Activated CD4-positive, alpha-beta T cell treated with anti-CD3 and anti-CD28 coated beads for 36 hours (primary cell): ENCODE measurements at regions of chr13 and their contacts with region 1.

Region 1: GRCh38 chr13:32195713-32196112 is 119.5 kb downstream of the ZAR1L start:
- DNase-seq: no peak
- ATAC-seq: no peak
- H3K4me3 Mint-ChIP-seq: no peak overlapping the region
- H3K27ac Mint-ChIP-seq: no peak overlapping the region
- H3K4me1 Mint-ChIP-seq: no peaks in the 10 kb centered on the region
- H3K27me3 Mint-ChIP-seq: no peaks in the 10 kb centered on the region

Region 2: DNA sequence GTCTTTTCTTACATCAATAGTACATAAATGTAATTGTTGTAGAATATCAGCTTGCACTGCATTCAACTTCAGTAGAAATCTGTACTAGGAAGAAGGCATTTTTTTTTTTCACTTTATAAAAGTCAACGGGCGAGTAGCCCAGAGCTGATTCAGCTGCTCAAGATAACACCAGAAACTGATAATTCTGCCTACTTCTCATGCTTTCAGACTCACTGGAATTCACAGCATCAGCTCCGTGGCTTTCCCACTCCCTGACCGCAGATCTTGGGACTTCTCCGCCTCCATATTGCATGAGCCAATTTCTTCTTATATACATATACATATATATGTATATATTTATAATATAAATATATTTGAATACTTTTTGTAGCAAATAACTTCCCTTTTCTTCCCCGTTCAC is 719.4 kb before region 1 on chr13:
- CTCF ChIA-PET with region 1: no interaction called
- POLR2A ChIA-PET with region 1: no interaction called
- intact Hi-C with region 1: loop called in 1 of 2 experiments (anchors 5 kb)
- DNase-seq: no peak
- ATAC-seq: no peak
- H3K4me3 Mint-ChIP-seq: no peak overlapping the region
- H3K27ac Mint-ChIP-seq: no peak overlapping the region
- H3K4me1 Mint-ChIP-seq: no peaks in the 10 kb centered on the region
- H3K27me3 Mint-ChIP-seq: peaks cover 14% of the 10 kb centered on the region